Esophagus muscularis mucosa (tissue), 4 donors: ENCODE measurements at regions of chrX and their contacts with region 1.

Region 1: DNA sequence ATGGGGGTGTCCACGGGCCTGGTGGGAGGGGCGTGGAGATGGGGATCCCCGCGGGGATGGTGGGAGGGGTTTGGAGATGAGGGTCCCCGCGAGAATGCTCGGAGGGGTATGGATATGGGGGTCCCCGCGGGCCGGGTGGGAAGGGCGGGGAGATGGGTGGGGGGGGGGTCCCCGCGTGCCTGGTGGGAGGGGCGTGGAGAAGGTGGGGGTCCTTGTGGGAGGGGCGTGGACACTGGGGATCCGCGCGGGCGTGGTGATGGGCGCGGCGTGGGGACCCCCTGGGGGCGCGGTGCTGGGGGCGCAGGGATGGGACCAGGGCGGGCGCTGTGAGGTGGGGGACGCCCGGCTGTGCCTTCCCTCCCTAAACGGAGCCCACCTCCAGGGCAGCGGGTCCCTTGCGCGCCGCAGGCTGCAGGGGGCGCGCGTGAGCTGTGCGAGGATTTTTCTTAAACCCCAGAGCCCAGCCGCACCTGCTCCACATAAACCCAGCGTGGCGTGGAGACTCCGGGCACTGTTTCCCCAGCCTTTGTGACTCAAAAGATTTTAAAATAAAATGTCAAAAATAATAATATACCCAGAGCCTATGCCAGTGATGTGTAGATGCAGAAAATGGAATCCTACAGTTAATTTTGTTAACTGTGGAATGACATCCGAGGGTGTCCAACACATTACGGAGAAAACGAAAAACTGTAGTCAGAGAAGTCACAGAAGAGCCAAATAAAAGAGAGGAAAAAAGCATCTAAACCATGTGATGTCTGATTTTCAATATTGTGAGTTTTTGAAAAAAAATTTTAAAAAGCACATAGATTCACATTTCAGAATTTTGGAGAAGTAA is 1.5 kb upstream of the ASMTL start:
- DNase-seq: peak; percentile 97
- H3K4me3 ChIP-seq: peak overlapping the region; percentile 74 to 99 (median 98)
- H3K27ac ChIP-seq: peak overlapping the region; percentile 86 to 96 (median 94)
- H3K4me1 ChIP-seq: peaks cover 14 to 37% (median 23%) of the 10 kb centered on the region in 4 donors
- H3K27me3 ChIP-seq: no peaks in the 10 kb centered on the region
- CTCF ChIP-seq: peak; percentile 92 to 100 (median 95)
- EP300 ChIP-seq: no peak
- POLR2A ChIP-seq: no peak

Region 2: DNA sequence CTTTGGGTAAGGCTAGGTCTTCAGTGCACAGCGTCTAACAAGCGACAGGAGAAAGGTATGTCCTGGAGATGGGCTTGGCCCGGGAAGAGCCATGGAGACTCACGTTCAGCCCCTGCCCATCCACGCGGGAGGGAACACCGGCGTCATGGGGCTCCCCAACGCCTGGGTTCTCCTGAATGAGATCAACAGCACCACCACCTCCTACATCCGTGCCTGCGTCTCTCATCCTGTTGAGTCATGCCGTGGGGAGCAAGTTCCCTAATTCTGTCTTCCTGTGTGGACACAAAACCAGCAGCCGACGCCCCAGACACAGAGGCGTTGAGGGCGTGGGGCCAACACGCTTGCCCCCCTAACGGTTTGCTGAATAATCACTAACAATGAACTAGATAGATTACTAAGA is 137.6 kb before region 1 on chrX:
- intact Hi-C with region 1: no loop called
- DNase-seq: no peak
- H3K4me3 ChIP-seq: no peak overlapping the region
- H3K27ac ChIP-seq: no peak overlapping the region
- H3K4me1 ChIP-seq: no peaks in the 10 kb centered on the region
- H3K27me3 ChIP-seq: no peaks in the 10 kb centered on the region
- CTCF ChIP-seq: no peak
- EP300 ChIP-seq: no peak
- POLR2A ChIP-seq: no peak

Region 3: DNA sequence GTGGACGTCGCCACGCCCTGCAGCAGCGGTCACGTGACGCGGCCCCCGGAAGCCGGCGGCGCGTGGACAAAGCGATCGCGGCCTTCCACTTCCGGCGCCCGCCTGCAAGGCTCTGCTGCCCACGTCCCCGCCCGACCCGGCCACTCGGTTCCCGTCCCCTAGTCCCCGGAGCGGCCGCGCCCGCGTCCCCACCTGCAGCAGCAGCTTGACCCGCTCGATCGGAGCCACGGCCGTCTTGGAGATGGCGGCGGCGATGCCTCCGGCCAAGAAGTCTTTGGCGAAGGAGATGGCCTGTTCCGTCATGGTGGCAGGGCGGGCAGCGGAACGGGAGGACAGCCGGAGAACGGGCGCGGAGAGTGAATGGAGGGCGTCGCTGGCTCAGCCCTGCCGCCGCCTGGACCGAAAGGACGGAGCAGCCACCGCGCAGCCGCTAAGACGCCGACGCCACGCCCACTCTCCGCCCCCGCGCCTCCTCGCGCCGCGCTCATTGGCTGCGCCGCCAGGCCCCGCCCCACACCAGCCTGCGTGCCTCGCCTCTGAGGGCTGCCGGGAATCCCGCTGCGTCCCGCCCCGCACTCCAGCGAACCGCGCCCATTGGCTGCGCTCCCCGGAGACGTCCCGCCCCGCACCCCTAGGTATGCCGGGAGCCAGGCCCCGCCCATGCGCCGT is 62.3 kb before region 1 on chrX and contains the start of gene SLC25A6:
- intact Hi-C with region 1: loop called (anchors 2 kb)
- DNase-seq: peak; percentile 100
- H3K4me3 ChIP-seq: peak within 1 kb of the TSS; percentile 91 to 100 (median 96)
- H3K27ac ChIP-seq: peak within 1 kb of the TSS; percentile 96 to 100 (median 99)
- H3K4me1 ChIP-seq: peaks cover 43 to 68% (median 65%) of the 10 kb centered on the region in 4 donors
- H3K27me3 ChIP-seq: no peaks in the 10 kb centered on the region
- CTCF ChIP-seq: peak in 1 of 3 experiments; percentile 25
- EP300 ChIP-seq: no peak
- POLR2A ChIP-seq: peak; percentile 91
- total RNA-seq, gene SLC25A6: 266 to 339 (median 313) TPM

Region 4: DNA sequence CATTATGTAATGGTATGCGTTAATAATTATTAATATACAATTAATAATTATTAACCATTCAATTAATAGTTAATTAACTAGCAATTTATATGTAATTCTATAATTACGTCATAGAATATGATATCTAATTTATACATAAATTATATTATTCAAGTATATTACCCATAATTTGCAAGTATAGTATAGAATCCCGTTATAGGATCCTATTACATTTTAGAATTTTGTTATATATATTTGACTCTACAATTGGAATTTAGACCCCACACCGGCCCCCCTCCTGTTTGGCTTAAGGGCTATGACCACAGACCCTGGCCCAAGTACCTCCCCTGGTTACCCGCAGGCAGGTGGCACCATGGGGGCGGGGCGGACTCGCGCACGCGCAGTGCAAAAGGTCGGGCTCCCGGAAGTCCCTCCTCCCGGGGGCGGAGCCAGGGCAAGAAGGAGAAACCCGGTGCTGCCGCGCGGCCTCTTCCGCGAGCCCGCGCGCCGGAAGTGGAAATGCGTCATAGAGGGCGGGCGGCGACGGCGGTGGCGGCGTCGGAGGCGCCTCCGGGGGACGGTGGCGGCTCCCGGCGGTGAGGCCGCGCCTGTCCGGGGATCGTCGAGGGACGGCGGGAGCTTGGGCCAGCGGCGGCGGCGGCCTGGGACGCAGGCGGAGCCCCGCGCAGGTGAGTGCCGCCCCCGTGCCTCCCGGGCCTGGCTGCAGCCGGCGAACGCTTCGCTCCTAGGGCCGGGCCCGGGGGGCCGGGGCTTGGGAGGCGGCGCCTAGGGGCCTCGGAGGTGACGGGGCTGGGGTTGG is 137.1 kb after region 1 on chrX and contains the start of gene AKAP17A:
- intact Hi-C with region 1: loop called (anchors 5 kb)
- DNase-seq: peak; percentile 99
- H3K4me3 ChIP-seq: peak within 1 kb of the TSS; percentile 72 to 95 (median 91)
- H3K27ac ChIP-seq: peak within 1 kb of the TSS; percentile 83 to 93 (median 87)
- H3K4me1 ChIP-seq: peaks cover 14 to 40% (median 30%) of the 10 kb centered on the region in 4 donors
- H3K27me3 ChIP-seq: no peaks in the 10 kb centered on the region
- CTCF ChIP-seq: peak in 2 of 3 experiments; percentile 21 to 30
- EP300 ChIP-seq: no peak
- POLR2A ChIP-seq: peak; percentile 34
- total RNA-seq, gene AKAP17A: 23.4 to 36.8 (median 31.0) TPM

Region 5: DNA sequence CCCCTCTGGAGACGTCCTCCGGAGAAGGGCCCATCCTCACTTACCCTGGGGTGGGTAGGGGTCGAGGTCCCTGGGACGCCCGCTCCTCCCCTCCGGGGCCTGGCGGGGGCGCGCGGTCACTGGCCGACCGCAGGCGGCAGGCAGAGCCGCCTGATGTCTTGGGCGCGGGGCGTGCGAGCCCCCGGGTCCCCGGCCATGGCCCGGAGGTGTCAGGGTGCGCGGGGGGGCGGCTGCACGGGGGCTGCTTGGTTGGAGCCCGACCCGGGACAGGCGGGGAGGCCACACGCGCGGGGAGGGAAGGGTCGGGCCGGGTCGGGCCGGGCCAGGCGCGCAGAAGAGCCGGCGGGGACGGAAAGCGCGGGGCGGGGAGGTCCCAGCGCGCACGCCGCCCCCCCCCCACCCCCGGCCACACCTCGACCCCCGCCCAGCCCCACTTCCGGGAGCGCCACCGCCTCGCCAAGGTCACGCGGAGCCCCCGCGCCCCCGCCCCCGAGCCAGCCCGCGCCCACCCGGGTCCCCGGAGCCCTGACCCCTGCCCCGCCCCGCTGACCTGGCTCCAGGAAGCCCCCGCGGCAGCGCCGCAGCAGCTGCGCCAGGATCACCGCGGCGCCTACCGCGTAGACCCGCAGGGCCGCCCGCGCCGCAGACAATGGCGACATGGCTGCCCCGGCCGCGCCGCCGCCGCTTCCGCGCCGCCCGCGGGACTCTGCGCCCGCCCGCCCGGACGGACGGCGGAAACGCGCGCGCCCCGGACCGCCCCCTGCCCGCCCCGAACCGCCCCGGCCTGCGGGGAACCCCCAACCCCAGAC is 1046.3 kb after region 1 on chrX and contains the starts of genes DHRSX and ZBED1:
- intact Hi-C with region 1: loop called (anchors 10 kb)
- DNase-seq: no peak
- H3K4me3 ChIP-seq: peak within 1 kb of the TSS; percentile 77 to 92 (median 84)
- H3K27ac ChIP-seq: peak within 1 kb of the TSS; percentile 86 to 96 (median 91)
- H3K4me1 ChIP-seq: peaks cover 24 to 49% (median 45%) of the 10 kb centered on the region in 4 donors
- H3K27me3 ChIP-seq: no peaks in the 10 kb centered on the region
- CTCF ChIP-seq: peak in 1 of 3 experiments; percentile 29
- EP300 ChIP-seq: no peak
- POLR2A ChIP-seq: no peak
- total RNA-seq, gene DHRSX: 19.6 to 22.4 (median 21.0) TPM
- total RNA-seq, gene ZBED1: 32.8 to 44.8 (median 39.5) TPM

Region 6: DNA sequence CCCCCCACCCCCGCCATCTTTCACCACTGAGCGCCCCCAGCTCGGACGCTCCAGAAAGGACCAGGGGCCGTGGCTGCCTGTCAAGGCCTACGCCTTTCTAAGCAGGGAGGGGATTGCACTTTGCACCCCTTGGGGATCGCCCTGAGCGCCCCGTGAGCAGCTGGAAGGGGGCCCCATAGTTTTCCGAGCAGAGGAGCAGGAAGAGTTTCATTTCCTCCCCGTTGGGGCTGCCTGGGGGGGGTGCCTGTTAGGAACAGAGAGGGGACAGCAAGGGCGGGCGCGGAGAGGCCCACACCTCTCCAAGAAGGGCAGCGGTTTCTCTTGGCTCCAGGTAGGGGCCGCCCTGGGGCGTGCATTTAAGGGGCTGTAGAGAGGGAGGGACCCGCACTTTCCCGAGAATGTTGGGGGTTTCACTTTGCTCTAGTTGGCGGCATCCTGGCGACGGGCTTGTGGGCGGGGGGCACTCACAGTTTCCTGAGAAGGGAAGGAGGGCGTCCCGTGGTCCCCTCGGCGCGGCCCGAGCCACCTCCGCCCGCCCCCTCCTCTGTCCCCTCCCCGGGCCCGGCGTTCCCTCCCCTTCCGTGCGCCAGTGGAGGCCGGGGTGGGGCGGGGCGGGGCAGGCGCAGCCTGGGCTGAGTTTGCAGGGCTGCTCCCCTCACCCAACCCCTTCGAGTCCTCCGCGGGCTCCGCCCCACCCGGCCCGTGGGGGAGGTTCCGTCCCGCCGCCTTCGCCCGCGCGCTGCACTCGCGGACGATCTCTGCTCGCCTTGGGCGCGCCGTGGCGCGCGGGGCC is 1154.7 kb after region 1 on chrX:
- intact Hi-C with region 1: loop called (anchors 5 kb)
- DNase-seq: peak; percentile 95
- H3K4me3 ChIP-seq: peak overlapping the region; percentile 70 to 94 (median 76)
- H3K27ac ChIP-seq: peak overlapping the region; percentile 76 to 85 (median 82)
- H3K4me1 ChIP-seq: peaks cover 3 to 29% (median 26%) of the 10 kb centered on the region in 4 donors
- H3K27me3 ChIP-seq: no peaks in the 10 kb centered on the region
- CTCF ChIP-seq: no peak
- EP300 ChIP-seq: no peak
- POLR2A ChIP-seq: no peak